RWPE1 (cell line): ENCODE measurements at regions of chr11 and their contacts with region 1.

Region 1: GRCh38 chr11:114262681-114263512 is 33.3 kb upstream of the NNMT start:
- DNase-seq: peak; percentile 62
- H3K27ac ChIP-seq: no peak overlapping the region; the same call in 1 of the 2 replicates
- CTCF ChIP-seq: peak; percentile 60

Region 2: GRCh38 chr11:113896156-113896879 is 366.6 kb before region 1 on chr11:
- CTCF ChIA-PET with region 1: interaction called, 60 read pairs
- POLR2A ChIA-PET with region 1: no interaction called
- DNase-seq: peak; percentile 31
- H3K27ac ChIP-seq: no peak overlapping the region
- CTCF ChIP-seq: peak; percentile 83

Region 3: DNA sequence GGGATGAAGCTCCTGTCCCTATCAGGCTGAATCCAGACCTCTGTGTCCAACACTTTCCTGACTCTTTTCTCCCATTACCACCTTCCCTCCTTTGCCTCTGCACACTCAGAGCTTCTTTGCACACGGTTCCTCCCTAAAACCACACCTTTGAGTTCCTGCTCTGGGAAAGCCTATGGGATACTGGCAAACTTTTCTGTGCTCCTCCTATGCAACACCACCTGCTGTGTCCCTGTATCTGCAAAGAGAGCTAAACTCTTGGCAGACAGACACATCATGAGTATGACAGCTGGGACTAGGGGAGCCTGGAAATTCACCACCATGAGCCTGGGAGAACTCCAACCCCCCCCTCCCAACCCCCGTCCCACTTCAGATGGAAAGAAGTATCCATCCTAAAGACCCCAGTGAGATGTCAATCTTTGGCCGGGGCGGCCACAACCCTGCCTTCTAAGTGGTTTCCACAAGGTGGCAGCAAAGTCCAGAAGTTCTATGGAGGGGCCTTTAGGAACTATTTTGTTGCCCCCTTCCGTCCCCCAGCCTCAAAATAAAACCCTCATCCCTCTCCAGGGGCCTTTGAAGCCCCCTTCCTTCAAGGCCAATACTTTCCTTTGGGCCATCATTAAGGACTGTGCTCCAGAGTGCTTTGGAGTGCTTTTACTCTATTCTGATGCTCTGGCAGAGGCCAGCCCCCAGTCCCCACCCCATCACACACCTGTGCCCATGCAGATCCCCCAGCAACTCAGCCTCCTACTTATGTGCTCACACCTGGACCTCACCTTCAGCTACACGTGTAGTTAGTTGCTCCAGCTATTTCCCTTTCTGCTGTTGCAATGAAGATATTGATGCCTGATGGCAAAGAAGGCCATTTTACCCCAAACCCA is 268.6 kb before region 1 on chr11:
- CTCF ChIA-PET with region 1: interaction called, 95 read pairs
- POLR2A ChIA-PET with region 1: no interaction called
- DNase-seq: peak; percentile 50
- H3K27ac ChIP-seq: no peak overlapping the region
- CTCF ChIP-seq: peak; percentile 62

Region 4: GRCh38 chr11:114036156-114036811 is 226.6 kb before region 1 on chr11:
- CTCF ChIA-PET with region 1: interaction called, 97 read pairs
- POLR2A ChIA-PET with region 1: no interaction called
- DNase-seq: peak; percentile 70
- H3K27ac ChIP-seq: peak overlapping the region; percentile 78
- CTCF ChIP-seq: peak; percentile 94

Region 5: GRCh38 chr11:114060392-114061350 is 202.2 kb before region 1 on chr11:
- CTCF ChIA-PET with region 1: interaction called, 10 read pairs
- POLR2A ChIA-PET with region 1: no interaction called
- DNase-seq: peak; percentile 31
- H3K27ac ChIP-seq: peak overlapping the region; percentile 93
- CTCF ChIP-seq: no peak